ENCODE measurements at regions of chr13 and their contacts with region 1.

Region 1: DNA sequence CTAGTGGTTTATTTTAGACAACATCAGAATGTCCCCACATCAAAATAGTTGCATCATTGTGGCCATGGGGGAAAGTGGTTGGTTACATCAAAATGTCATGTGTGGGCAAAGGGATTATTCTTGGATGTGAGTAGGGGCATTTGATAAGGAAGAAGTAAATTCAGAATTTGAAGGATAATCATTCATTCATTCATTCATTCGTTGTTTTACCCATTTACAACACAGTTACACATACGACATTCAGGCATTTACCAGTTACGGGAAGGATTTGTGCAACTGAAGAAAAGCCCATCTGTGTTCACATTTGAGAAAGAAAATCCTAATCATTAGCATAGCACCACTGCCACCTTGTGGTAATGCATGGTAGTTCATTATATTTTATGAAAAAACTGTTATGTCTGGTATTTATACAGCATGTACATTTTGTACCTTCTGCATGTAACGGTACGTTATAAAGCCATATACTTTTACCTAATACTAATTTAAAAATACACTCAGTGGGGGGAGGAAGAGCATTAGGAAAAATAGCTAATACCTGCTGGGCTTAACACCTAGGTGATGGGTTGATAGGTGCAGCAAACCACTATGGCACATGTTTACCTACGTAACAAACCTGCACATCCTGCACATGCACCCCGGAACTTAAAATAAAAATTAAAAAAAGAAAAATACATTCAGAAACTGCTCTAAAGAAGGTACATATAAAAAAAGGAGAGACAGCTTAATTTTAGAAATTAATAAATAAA is 62.1 kb downstream of the DGKH start:
- DNase-seq: peak; percentile 24
- H3K4me3 Mint-ChIP-seq: no peak overlapping the region
- H3K27ac Mint-ChIP-seq: no peak overlapping the region
- H3K4me1 Mint-ChIP-seq: peaks cover 42% of the 10 kb centered on the region
- H3K27me3 Mint-ChIP-seq: no peaks in the 10 kb centered on the region
- CTCF ChIP-seq: no peak

Region 2: GRCh38 chr13:41905600-41906254 is 204.9 kb before region 1 on chr13:
- CTCF ChIA-PET with region 1: no interaction called
- intact Hi-C with region 1: loop called (anchors 2 kb)
- DNase-seq: no peak
- H3K4me3 Mint-ChIP-seq: no peak overlapping the region
- H3K27ac Mint-ChIP-seq: no peak overlapping the region
- H3K4me1 Mint-ChIP-seq: no peaks in the 10 kb centered on the region
- H3K27me3 Mint-ChIP-seq: no peaks in the 10 kb centered on the region
- CTCF ChIP-seq: no peak

Region 3: DNA sequence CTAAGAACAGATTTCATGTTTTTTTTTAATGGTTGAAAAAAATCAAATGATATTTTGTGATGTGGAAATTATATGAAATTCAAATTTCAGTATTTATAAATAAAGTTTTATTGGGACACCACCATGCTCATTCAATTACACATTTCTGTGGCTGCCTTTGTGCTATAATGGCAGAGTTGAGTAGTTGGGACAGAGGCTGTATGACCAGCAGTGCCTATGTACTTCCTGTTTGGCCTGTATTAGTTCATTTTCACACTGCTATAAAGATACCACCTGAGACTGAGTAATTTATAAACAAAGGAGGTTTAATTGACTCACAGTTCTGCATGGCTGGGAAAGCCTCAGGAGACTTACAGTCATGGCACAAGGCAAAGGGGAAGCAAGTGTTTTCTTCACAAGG is 194.9 kb after region 1 on chr13:
- CTCF ChIA-PET with region 1: no interaction called
- intact Hi-C with region 1: no loop called
- DNase-seq: no peak
- H3K4me3 Mint-ChIP-seq: no peak overlapping the region
- H3K27ac Mint-ChIP-seq: no peak overlapping the region
- H3K4me1 Mint-ChIP-seq: no peaks in the 10 kb centered on the region
- H3K27me3 Mint-ChIP-seq: no peaks in the 10 kb centered on the region
- CTCF ChIP-seq: no peak